GM13976 (cell line): ENCODE measurements at regions of chr1 and their contacts with region 1.

Region 1: GRCh38 chr1:91500756-91501522 is at the start of gene CDC7:
- DNase-seq: peak; percentile 91
- CTCF ChIP-seq: no peak

Region 2: DNA sequence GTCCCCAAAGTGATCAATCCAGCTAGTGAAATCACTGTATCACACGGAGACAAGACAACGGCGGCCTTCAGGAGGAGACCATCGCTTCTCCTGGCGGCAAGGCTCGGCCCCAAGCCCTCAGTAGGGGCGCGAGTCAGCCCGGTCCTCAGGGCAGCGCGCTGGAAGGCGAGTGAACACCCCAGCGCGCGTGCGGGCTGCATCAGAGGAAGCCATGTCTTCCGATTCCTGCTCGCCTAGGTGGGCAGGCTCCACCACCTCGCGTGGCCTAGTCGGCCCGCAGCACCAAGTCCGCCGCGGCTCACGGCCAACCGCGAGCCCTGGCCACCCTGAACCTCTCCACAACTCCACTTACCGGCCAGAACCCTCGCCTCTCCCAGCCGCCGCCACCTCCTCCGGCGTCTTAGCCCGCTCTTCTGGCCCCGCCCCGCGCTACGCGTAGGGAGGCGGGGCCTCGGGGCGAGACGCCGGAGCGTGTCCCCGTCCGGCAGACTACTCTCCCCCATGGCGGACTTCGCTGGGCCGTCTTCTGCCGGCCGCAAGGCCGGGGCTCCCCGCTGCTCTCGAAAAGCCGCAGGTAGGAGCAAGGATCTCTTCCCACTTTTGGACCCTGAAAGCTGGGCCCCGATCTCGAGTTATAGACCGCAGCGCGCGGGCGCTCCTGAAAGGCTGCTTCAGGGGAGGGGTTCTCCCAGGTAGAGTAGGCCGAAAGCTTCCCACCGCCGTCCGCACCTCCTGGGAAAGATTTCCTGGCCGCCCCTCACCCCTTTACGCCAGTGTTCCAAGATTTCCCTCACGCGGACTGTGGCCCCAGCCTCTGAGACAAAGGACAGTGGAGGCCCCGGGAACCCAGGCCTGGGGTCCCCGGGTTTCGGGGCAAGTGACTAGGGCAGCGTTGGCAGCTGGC is 797.9 kb after region 1 on chr1 and contains the starts of genes GLMN and RPAP2:
- in situ Hi-C with region 1: loop called (anchors 25 kb)
- DNase-seq: peak; percentile 92
- CTCF ChIP-seq: no peak